ENCODE measurements at regions of chr11 and their contacts with region 1.

Region 1: GRCh38 chr11:36469063-36469462 is 41.0 kb downstream of the TRAF6 start:
- DNase-seq: peak; percentile 35
- H3K4me3 Mint-ChIP-seq: no peak overlapping the region
- H3K27ac Mint-ChIP-seq: no peak overlapping the region
- H3K4me1 Mint-ChIP-seq: no peaks in the 10 kb centered on the region
- H3K27me3 Mint-ChIP-seq: peaks cover 17% of the 10 kb centered on the region

Region 2: DNA sequence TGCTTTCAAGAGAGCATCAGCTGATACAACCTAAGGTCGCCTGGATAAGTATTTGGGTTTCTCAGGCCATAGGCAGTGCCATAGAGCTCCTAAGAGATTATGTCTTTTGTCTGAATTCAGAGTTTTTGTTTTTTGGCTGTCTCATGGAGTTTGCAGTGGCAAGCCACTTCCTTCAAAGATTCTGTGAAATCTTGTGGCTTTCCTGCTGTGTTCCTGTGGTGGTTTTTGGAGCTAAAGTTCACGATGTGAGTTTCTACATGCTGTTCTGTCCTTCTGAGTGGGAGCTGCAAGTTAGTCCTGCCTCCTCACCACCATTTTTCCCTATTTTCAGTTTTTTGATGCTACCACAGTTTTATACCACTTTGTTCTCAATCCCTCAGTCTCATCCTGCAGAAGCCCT is 291.2 kb before region 1 on chr11:
- CTCF ChIA-PET with region 1: no interaction called
- DNase-seq: no peak
- H3K4me3 Mint-ChIP-seq: no peak overlapping the region
- H3K27ac Mint-ChIP-seq: no peak overlapping the region
- H3K4me1 Mint-ChIP-seq: peaks cover 11% of the 10 kb centered on the region
- H3K27me3 Mint-ChIP-seq: peaks cover 32% of the 10 kb centered on the region

Region 3: GRCh38 chr11:36196411-36196998 is 272.6 kb before region 1 on chr11:
- CTCF ChIA-PET with region 1: no interaction called
- DNase-seq: no peak
- H3K4me3 Mint-ChIP-seq: no peak overlapping the region
- H3K27ac Mint-ChIP-seq: no peak overlapping the region
- H3K4me1 Mint-ChIP-seq: no peaks in the 10 kb centered on the region
- H3K27me3 Mint-ChIP-seq: no peaks in the 10 kb centered on the region

Region 4: GRCh38 chr11:36354221-36355003 is 114.7 kb before region 1 on chr11:
- CTCF ChIA-PET with region 1: interaction called, 13 read pairs
- DNase-seq: no peak
- H3K4me3 Mint-ChIP-seq: no peak overlapping the region
- H3K27ac Mint-ChIP-seq: no peak overlapping the region
- H3K4me1 Mint-ChIP-seq: peaks cover 50% of the 10 kb centered on the region
- H3K27me3 Mint-ChIP-seq: peaks cover 15% of the 10 kb centered on the region